K562 (cell line): ENCODE measurements at regions of chr22 and their contacts with region 1.

Region 1: GRCh38 chr22:22913989-22914388 is 26.4 kb downstream of the IGLL5 start:
- DNase-seq: peak in 1 of 4 experiments; percentile 48
- ATAC-seq: no peak
- H3K4me3 ChIP-seq: no peak overlapping the region
- H3K27ac ChIP-seq: no peak overlapping the region
- H3K4me1 ChIP-seq: no peaks in the 10 kb centered on the region
- H3K27me3 ChIP-seq: peaks cover 30 to 96% of the 10 kb centered on the region in 2 experiments
- CTCF ChIP-seq: no peak
- EP300 ChIP-seq: no peak
- POLR2A ChIP-seq: no peak
- RAD21 ChIP-seq: no peak

Region 2: DNA sequence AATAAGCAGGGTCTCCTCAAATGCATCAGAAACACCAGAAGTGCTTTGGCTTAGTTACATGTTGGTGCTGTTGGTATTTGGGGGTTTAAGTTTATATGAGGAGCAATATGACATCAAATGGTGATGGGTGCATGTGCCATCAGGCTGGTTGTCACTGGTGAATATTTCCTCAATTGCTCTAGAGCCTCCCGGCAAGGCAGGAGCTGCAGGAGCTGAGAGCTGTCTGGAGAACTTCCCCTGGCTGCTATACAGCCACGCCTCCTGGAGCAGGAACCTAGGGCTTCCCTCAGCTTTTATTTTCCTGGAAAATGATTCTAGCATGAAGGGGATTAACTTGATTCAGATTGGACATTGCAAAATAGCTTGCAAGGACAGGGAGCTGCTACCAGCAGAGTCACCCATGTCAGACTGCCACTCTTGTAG is 10.6 kb before region 1 on chr22:
- CTCF ChIA-PET with region 1: no interaction called
- POLR2A ChIA-PET with region 1: interaction called, 30 read pairs
- in situ Hi-C with region 1: no loop called
- intact Hi-C with region 1: no loop called
- DNase-seq: peak in 3 of 4 experiments; percentile 53 to 59 (median 53)
- ATAC-seq: no peak
- H3K4me3 ChIP-seq: no peak overlapping the region
- H3K27ac ChIP-seq: no peak overlapping the region
- H3K4me1 ChIP-seq: no peaks in the 10 kb centered on the region
- H3K27me3 ChIP-seq: peaks cover 37 to 44% of the 10 kb centered on the region in 2 experiments; a peak in 4 of 5 replicates
- CTCF ChIP-seq: no peak
- EP300 ChIP-seq: no peak
- POLR2A ChIP-seq: no peak
- RAD21 ChIP-seq: no peak

Region 3: DNA sequence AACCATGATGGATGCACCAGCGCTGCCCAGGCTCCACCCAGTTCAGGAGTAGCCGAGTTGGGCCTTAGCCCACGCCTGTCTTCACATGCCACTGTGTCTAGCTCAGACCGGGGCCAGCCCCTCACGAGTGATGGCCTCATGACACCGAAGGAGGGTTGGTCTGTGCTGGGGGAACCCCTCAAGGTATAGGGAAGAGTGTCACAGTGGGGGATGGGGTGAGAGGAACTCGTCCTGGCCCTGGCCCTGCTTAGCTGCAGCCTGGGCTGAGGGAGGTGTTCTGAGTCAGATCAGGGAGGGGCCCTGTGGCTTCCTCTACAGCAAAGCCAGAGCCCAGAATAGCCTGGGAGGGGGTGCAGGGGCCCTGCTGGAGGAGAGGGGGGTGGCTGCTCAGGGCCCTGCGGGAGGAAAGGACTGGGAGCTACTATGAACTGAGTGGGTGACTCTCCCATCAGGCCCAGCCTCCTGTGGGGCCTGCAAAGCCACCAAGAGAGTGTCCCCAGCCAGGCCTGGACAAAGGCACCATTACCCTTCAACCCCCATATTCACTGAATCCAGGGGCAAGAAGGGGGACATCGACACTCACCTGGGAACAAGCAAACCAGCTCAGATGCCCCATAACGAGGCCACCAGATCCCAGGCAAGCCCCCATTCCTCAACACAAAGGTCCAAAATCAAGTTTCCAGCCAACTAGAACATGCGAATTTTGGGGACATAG is 14.8 kb after region 1 on chr22:
- CTCF ChIA-PET with region 1: no interaction called
- POLR2A ChIA-PET with region 1: interaction called, 39 read pairs
- in situ Hi-C with region 1: no loop called
- intact Hi-C with region 1: no loop called
- DNase-seq: peak in 3 of 4 experiments; percentile 58 to 89 (median 67)
- ATAC-seq: peak; percentile 61
- H3K4me3 ChIP-seq: no peak overlapping the region
- H3K27ac ChIP-seq: no peak overlapping the region; the same call in 2 of the 3 replicates
- H3K4me1 ChIP-seq: peaks cover 16 to 18% of the 10 kb centered on the region in 2 experiments
- H3K27me3 ChIP-seq: peaks cover 8 to 48% of the 10 kb centered on the region in 2 experiments; a peak in 3 of 5 replicates
- CTCF ChIP-seq: peak in 2 of 3 experiments; percentile 2 to 13; a peak in 2 of 6 replicates
- EP300 ChIP-seq: no peak; the same call in 1 of the 2 replicates
- POLR2A ChIP-seq: no peak
- RAD21 ChIP-seq: 0 out of 4 replicates have a peak, but pooled peaks of 1 of the 2 experiments have one; percentile 3